CD8-positive, alpha-beta memory T cell (primary cell): ENCODE measurements at regions of chr18 and their contacts with region 1.

Region 1: DNA sequence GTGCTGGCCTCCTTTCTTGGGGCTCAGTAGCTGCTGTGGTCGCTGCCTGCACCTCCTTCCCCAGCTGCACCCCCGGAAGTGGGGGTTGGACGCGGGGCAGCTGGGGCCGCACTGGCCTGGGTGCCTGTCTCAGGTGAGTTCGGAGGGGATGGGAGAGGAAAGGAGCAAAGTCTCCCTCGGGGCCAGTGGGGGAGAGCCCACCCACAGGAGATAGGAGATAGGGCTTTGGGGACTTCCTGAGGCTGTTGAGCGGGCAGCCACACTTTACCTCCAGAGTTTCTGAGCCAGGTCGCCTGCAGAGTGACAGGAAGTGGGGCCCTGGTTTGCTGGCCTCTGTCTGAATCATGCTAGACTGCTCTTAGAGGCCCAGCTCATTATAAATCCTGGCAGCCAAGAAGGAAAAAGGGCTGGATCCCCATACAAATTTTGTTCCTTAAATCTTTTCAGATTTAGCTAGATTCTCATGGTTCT is 8.1 kb downstream of the MBP start:
- DNase-seq: peak; percentile 50 to 78 (median 57)
- H3K4me3 ChIP-seq: peak overlapping the region; percentile 46
- H3K4me3 Mint-ChIP-seq: peak overlapping the region; percentile 36 to 87 (median 77)
- H3K27ac ChIP-seq: no peak overlapping the region
- H3K27ac Mint-ChIP-seq: peak overlapping the region; percentile 84 to 98 (median 94)
- H3K4me1 ChIP-seq: peaks cover 90% of the 10 kb centered on the region
- H3K4me1 Mint-ChIP-seq: peaks cover 98 to 100% (median 98%) of the 10 kb centered on the region in 3 donors
- H3K27me3 ChIP-seq: no peaks in the 10 kb centered on the region
- H3K27me3 Mint-ChIP-seq: peaks cover 0 to 3% of the 10 kb centered on the region in 2 donors

Region 2: GRCh38 chr18:77013811-77014521 is 110.5 kb before region 1 on chr18:
- CTCF ChIA-PET with region 1: no interaction called
- POLR2A ChIA-PET with region 1: no interaction called
- DNase-seq: no peak
- H3K4me3 ChIP-seq: no peak overlapping the region
- H3K4me3 Mint-ChIP-seq: no peak overlapping the region
- H3K27ac ChIP-seq: no peak overlapping the region
- H3K27ac Mint-ChIP-seq: peak overlapping the region in 4 of 8 donors; percentile 30 to 78 (median 54)
- H3K4me1 ChIP-seq: no peaks in the 10 kb centered on the region
- H3K4me1 Mint-ChIP-seq: peaks cover 58 to 76% (median 64%) of the 10 kb centered on the region in 3 donors
- H3K27me3 ChIP-seq: no peaks in the 10 kb centered on the region
- H3K27me3 Mint-ChIP-seq: no peaks in the 10 kb centered on the region

Region 3: GRCh38 chr18:77108001-77108692 is 16.3 kb before region 1 on chr18:
- CTCF ChIA-PET with region 1: interaction called, 56 read pairs
- POLR2A ChIA-PET with region 1: interaction called, 28 read pairs
- DNase-seq: no peak
- H3K4me3 ChIP-seq: no peak overlapping the region
- H3K4me3 Mint-ChIP-seq: peak overlapping the region; percentile 26 to 74 (median 69)
- H3K27ac ChIP-seq: no peak overlapping the region
- H3K27ac Mint-ChIP-seq: peak overlapping the region; percentile 82 to 98 (median 96)
- H3K4me1 ChIP-seq: peaks cover 63% of the 10 kb centered on the region
- H3K4me1 Mint-ChIP-seq: peaks cover 90 to 99% (median 98%) of the 10 kb centered on the region in 3 donors
- H3K27me3 ChIP-seq: no peaks in the 10 kb centered on the region
- H3K27me3 Mint-ChIP-seq: no peaks in the 10 kb centered on the region

Region 4: GRCh38 chr18:77262470-77263142 is 138.1 kb after region 1 on chr18:
- CTCF ChIA-PET with region 1: no interaction called
- POLR2A ChIA-PET with region 1: no interaction called
- DNase-seq: no peak
- H3K4me3 ChIP-seq: no peak overlapping the region
- H3K4me3 Mint-ChIP-seq: no peak overlapping the region
- H3K27ac ChIP-seq: no peak overlapping the region
- H3K27ac Mint-ChIP-seq: peak overlapping the region in 1 of 8 donors; percentile 24
- H3K4me1 ChIP-seq: no peaks in the 10 kb centered on the region
- H3K4me1 Mint-ChIP-seq: no peaks in the 10 kb centered on the region
- H3K27me3 ChIP-seq: no peaks in the 10 kb centered on the region
- H3K27me3 Mint-ChIP-seq: peaks cover 21 to 45% of the 10 kb centered on the region in 2 donors

Region 5: DNA sequence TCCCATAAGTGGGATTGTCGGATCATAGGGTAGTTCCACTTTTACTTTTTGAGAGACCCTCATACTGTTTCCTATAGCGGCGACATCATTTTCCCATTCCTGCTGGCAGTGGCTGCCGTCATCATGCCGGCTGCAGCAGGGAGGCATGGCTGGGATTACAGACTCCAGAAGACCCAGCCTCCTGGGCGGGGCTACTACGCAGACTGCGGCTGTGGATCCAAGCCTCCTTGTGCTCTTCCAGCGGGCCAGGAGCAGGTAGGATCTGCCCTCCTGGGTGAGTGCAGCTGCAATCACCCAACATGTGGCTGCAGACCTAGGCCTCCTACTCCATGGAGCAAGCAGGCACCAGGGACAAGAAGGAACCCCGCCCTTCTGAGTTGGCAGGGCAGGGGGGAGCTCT is 484.3 kb after region 1 on chr18:
- CTCF ChIA-PET with region 1: no interaction called
- POLR2A ChIA-PET with region 1: no interaction called
- DNase-seq: no peak
- H3K4me3 ChIP-seq: no peak overlapping the region
- H3K4me3 Mint-ChIP-seq: no peak overlapping the region
- H3K27ac ChIP-seq: no peak overlapping the region
- H3K27ac Mint-ChIP-seq: no peak overlapping the region
- H3K4me1 ChIP-seq: no peaks in the 10 kb centered on the region
- H3K4me1 Mint-ChIP-seq: no peaks in the 10 kb centered on the region
- H3K27me3 ChIP-seq: no peaks in the 10 kb centered on the region
- H3K27me3 Mint-ChIP-seq: peaks cover 4 to 15% of the 10 kb centered on the region in 2 donors